Activated CD8-positive, alpha-beta memory T cell treated with anti-CD3 and anti-CD28 coated beads, Interleukin-2, amount 10 ng/mL, durations not matched to agents 7 days and 5 days (primary cell): ENCODE measurements at regions of chr6 and their contacts with region 1.

Region 1: DNA sequence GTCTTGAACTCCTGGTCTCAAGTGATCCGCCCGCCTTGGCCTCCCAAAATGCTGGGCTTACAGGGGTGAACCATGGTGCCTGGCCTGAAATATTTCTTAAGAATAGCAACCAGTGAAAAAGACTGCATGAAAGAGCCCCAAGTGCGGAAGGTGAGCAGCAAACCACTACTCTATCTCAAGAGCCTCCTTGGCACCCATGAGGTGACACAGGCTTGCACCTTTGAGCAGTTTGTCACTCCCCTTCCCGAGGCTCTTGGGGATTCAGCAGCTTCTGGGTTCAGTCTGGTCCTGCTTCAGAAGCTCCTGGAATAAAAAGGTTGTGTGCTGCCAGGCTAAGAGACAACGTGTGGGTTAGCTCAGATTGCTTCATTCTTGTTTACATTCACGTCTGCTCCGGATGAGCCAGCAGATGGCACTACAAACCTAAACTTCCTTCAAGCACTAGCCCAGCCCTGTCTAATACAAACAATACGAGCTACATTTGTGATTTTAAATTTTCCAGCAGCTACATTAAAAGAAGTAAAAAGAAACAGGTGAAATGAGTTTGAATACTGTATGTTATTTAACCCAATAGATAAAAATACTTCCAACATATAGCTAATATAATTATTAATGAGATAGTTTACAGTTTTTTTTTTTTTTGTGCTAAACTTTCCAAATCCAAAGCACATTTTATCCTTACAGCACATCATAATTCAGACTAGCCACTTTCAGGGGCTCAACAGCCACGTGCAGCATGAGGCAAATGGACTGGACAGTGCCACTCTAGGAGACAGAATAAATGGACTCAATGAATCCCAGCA is 46.2 kb downstream of the GJA10 start:
- DNase-seq: peak; percentile 83
- ATAC-seq: peak; percentile 94
- H3K4me3 Mint-ChIP-seq: no peak overlapping the region
- H3K27ac Mint-ChIP-seq: no peak overlapping the region
- H3K4me1 Mint-ChIP-seq: peaks cover 33% of the 10 kb centered on the region
- H3K27me3 Mint-ChIP-seq: no peaks in the 10 kb centered on the region

Region 2: GRCh38 chr6:89952686-89953085 is 12.3 kb after region 1 on chr6:
- CTCF ChIA-PET with region 1: interaction called, 12 read pairs
- DNase-seq: peak; percentile 88
- ATAC-seq: peak; percentile 87
- H3K4me3 Mint-ChIP-seq: peak overlapping the region; percentile 53
- H3K27ac Mint-ChIP-seq: peak overlapping the region; percentile 87
- H3K4me1 Mint-ChIP-seq: peaks cover 63% of the 10 kb centered on the region
- H3K27me3 Mint-ChIP-seq: no peaks in the 10 kb centered on the region

Region 3: DNA sequence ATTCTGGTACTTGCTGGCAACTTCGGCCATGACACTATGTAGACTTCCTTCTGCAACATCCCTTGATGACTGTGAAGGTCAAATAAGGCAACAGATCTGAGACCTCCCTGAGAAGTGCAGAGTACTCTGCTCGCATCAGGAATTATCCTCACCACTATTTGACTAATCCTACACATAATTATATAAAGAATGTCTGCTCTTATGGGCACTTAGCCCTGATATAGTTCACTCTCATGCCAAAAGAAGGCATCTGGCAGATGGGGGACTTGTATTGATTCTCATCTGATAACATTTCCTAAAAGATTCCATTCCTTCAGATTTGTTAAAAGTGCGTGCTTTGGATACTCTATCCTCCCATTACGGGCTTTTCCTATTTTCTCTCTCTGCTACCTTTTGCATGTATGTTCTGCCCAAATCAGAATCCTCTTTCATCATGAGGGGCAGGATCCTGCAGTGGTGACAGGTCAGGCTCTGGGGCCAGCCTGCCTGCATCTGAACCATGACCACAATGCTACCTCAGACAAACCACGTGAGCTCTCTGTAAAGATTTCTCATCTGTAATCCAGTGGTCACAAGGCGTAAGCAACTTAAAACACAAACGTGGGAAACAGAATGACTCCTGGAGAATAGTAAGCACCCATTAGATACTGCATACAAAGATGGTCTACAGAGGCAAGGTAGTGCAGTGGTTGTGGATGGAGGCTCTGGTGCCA is 87.8 kb after region 1 on chr6:
- CTCF ChIA-PET with region 1: no interaction called
- DNase-seq: peak; percentile 76
- ATAC-seq: peak; percentile 64
- H3K4me3 Mint-ChIP-seq: no peak overlapping the region
- H3K27ac Mint-ChIP-seq: no peak overlapping the region
- H3K4me1 Mint-ChIP-seq: peaks cover 55% of the 10 kb centered on the region
- H3K27me3 Mint-ChIP-seq: no peaks in the 10 kb centered on the region

Region 4: GRCh38 chr6:90118581-90118980 is 178.2 kb after region 1 on chr6:
- CTCF ChIA-PET with region 1: interaction called, 11 read pairs
- DNase-seq: no peak
- ATAC-seq: no peak
- H3K4me3 Mint-ChIP-seq: no peak overlapping the region
- H3K27ac Mint-ChIP-seq: no peak overlapping the region
- H3K4me1 Mint-ChIP-seq: peaks cover 7% of the 10 kb centered on the region
- H3K27me3 Mint-ChIP-seq: no peaks in the 10 kb centered on the region

Region 5: DNA sequence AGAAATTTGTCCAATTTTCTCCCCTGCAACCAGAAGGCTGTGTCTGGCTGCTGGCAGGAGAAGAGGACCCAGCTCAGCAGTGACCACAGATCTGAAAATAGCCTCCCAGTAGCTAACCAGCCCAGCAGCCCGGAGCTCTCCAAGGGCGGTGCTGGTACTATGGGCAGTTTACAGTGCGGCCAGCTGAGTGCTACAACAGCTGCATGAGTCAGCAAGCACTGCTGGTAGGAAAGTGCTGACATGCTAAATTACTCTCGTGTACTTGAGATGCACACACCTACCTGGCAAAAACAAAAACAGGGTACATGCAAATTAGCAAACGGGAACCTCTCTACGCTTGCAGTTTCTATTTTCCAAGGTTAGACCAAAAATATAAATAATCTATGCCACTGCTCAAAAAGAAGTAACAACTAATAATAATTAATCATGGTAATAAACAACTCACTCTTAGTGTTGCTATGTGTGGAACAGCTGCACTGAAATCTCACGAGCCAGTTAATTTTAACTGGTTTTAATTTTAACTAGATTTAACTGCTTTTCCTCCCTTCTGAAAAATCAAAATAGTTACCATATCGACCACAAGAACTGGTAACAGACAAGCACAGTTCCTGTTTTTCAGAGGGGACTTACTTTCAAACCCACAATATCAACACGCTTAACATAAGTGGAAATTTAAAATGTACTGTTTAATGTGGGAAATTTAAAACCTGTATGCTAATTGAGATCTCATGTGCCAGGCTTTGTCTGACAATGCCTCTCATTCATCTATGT is 345.4 kb after region 1 on chr6:
- CTCF ChIA-PET with region 1: interaction called, 12 read pairs
- DNase-seq: peak; percentile 86
- ATAC-seq: peak; percentile 69
- H3K4me3 Mint-ChIP-seq: peak overlapping the region; percentile 79
- H3K27ac Mint-ChIP-seq: peak overlapping the region; percentile 93
- H3K4me1 Mint-ChIP-seq: peaks cover 59% of the 10 kb centered on the region
- H3K27me3 Mint-ChIP-seq: peaks cover 10% of the 10 kb centered on the region

Region 6: DNA sequence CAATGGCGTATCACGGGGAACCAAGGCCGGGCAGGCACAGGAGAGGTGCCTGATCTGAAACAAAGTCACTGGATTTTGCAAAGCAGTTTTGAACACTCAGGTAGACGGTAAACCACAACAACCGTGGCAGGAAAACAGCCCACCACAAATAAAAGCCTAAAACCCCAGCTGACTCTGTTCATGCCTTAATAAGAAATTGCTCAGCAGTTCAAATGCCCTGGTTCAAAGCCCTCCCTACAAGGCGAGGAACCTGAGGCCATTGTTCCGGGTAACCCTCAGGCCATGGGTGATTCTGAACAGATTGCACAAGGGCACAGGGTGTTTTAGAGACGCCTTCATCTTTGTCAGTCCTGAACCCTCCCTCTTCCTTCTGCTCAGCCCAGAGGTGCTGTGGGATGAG is 532.3 kb after region 1 on chr6:
- CTCF ChIA-PET with region 1: interaction called, 153 read pairs
- DNase-seq: peak; percentile 86
- ATAC-seq: peak; percentile 42
- H3K4me3 Mint-ChIP-seq: peak overlapping the region; percentile 70
- H3K27ac Mint-ChIP-seq: peak overlapping the region; percentile 88
- H3K4me1 Mint-ChIP-seq: peaks cover 90% of the 10 kb centered on the region
- H3K27me3 Mint-ChIP-seq: peaks cover 6% of the 10 kb centered on the region

Region 7: GRCh38 chr6:90631046-90631445 is 690.6 kb after region 1 on chr6:
- CTCF ChIA-PET with region 1: no interaction called
- DNase-seq: no peak
- ATAC-seq: no peak
- H3K4me3 Mint-ChIP-seq: no peak overlapping the region
- H3K27ac Mint-ChIP-seq: no peak overlapping the region
- H3K4me1 Mint-ChIP-seq: no peaks in the 10 kb centered on the region
- H3K27me3 Mint-ChIP-seq: peaks cover 18% of the 10 kb centered on the region